ENCODE measurements at regions of chr11 and their contacts with region 1.

Region 1: GRCh38 chr11:1389103-1389931 is 417 bp upstream of the BRSK2 start:
- DNase-seq: peak; percentile 98
- ATAC-seq: peak; percentile 99

Region 2: GRCh38 chr11:1309498-1310317 is 79.6 kb before region 1 on chr11 and contains the start of gene TOLLIP:
- intact Hi-C with region 1: loop called in 1 of 2 experiments (anchors 10 kb)
- DNase-seq: peak; percentile 96
- ATAC-seq: peak; percentile 96
- total RNA-seq, gene TOLLIP: 43.4 to 50.8 TPM